Lower leg skin (tissue), 4 donors: ENCODE measurements at regions of chr3 and their contacts with region 1.

Region 1: GRCh38 chr3:139329345-139329850 is 14.4 kb upstream of the MRPS22 start:
- DNase-seq: peak; percentile 77 to 97
- H3K4me3 ChIP-seq: no peak overlapping the region
- CTCF ChIP-seq: peak in 1 of 3 donors; percentile 95
- POLR2A ChIP-seq: no peak

Region 2: DNA sequence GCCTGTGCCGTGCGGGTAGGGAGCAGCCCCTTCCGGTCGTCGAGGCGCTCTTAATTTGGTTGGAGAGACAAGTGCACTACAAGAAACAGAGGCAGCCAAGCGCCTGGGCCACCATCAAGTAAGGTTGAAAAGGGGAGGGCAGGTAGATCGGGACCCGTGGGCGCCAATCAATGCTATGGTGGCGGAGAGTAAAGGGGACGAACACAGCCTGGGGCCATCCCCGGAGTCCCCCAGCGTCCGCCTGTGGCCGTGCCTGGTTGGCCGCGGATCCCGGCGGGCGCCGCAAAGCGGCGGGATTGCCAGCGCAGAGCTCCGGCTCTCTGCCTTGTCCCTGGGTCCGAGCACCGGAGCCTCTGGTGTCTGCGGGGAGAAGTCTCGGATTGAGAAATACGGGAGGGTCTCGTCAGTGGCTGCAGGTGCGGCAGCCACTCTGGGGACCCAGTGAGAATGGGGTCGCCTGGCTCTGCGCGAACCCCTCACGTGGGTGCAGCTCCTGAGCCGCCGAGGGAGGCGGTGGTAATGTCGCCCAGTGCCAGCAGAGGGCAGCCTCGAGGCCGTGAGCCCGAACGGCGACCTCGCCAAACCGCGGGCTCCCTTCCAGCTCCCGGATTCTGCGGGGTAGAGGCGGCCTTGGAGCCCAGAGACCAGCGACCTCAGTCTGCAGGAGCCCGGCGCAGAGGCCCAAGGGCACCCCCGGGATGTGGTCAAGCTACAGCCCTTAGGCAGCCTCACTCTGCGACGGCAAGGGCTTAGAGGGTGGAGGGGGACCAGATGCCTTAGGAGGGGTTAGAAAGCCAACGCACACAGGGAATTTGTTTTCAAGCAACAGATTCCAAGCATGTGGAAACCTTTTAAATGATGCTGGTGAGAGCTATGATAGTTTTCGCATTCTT is 393.3 kb before region 1 on chr3:
- intact Hi-C with region 1: loop called (anchors 5 kb)
- DNase-seq: peak; percentile 52 to 94
- H3K4me3 ChIP-seq: no peak overlapping the region
- CTCF ChIP-seq: peak in 1 of 3 donors; percentile 28
- POLR2A ChIP-seq: no peak

Region 3: DNA sequence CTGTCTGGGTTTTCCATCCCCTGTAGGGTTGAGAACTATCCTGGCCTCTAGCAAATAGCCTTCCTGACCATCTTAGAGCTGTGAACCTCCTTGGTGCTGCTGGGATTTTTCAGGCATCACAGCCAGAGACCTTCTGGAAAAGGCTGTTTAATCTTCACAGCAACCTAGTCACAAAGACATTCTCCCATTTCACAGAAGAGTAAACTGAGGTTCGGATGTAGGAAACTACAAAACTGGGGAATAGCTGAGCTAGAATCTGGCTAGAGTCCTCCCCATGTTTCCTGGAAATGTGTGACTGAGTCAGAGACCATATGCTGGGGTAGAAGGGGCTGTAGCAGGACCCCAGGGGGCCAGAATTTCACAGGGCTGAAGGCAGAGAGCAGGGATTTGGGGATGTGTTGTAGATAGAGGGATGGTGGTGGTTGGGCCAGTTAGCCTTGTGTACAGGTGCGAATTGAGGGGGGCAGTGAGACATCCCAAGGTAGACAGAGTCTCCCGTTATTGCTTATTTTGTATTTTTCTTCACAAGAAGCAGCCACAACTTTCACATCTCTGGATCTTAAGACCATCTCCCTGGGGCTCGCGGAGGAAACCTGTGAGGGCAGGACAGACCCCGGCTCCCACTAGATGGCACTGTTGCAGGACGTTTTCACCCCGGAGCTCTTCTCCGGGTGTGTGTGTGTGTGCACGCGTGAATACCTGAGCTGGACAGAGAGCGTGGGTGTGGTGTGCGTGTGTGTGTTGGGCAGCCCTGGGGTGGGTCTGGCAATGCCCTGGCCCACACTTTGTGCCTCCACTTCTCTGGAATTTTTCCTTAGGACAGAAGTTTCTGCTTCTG is 217.8 kb before region 1 on chr3:
- intact Hi-C with region 1: loop called (anchors 5 kb)
- DNase-seq: peak; percentile 38 to 91
- H3K4me3 ChIP-seq: no peak overlapping the region
- CTCF ChIP-seq: peak in 1 of 3 donors; percentile 40
- POLR2A ChIP-seq: no peak

Region 4: GRCh38 chr3:139227165-139227564 is 102.2 kb before region 1 on chr3:
- intact Hi-C with region 1: no loop called
- DNase-seq: no peak
- H3K4me3 ChIP-seq: no peak overlapping the region
- CTCF ChIP-seq: no peak
- POLR2A ChIP-seq: no peak